HepG2 (cell line): ENCODE measurements at regions of chr12 and their contacts with region 1.

Region 1: GRCh38 chr12:27549801-27550652 is 26.0 kb downstream of the PPFIBP1 start:
- DNase-seq: peak; percentile 99
- ATAC-seq: peak; percentile 92
- H3K4me3 ChIP-seq: peak overlapping the region; percentile 21 to 57 (median 54); a peak in 5 of 6 replicates
- H3K27ac ChIP-seq: peak overlapping the region; percentile 86
- H3K4me1 ChIP-seq: peaks cover 87% of the 10 kb centered on the region
- H3K27me3 ChIP-seq: no peaks in the 10 kb centered on the region
- CTCF ChIP-seq: no peak; the same call in 1 of the 2 replicates
- EP300 ChIP-seq: peak; percentile 91 to 92; a peak in 3 of 4 replicates
- POLR2A ChIP-seq: peak in 1 of 2 experiments; percentile 46; a peak in 1 of 4 replicates
- RAD21 ChIP-seq: 0 out of 2 replicates have a peak, but pooled peaks have one; percentile 7

Region 2: GRCh38 chr12:27523642-27524493 is 26.2 kb before region 1 on chr12 and contains the start of gene PPFIBP1:
- CTCF ChIA-PET with region 1: no interaction called
- POLR2A ChIA-PET with region 1: interaction called, 65 read pairs
- in situ Hi-C with region 1: no loop called
- intact Hi-C with region 1: loop called (anchors 1 kb)
- DNase-seq: peak; percentile 96
- ATAC-seq: peak; percentile 99
- H3K4me3 ChIP-seq: peak within 1 kb of the TSS; percentile 74 to 97 (median 93)
- H3K27ac ChIP-seq: peak within 1 kb of the TSS; percentile 82
- H3K4me1 ChIP-seq: peaks cover 33% of the 10 kb centered on the region
- H3K27me3 ChIP-seq: no peaks in the 10 kb centered on the region; a peak in 1 of 5 replicates
- CTCF ChIP-seq: peak; percentile 48
- EP300 ChIP-seq: no peak
- POLR2A ChIP-seq: peak; percentile 89 to 92
- RAD21 ChIP-seq: peak; percentile 54
- total RNA-seq, gene PPFIBP1: 21.8 and 32.0 TPM in 2 replicates

Region 3: DNA sequence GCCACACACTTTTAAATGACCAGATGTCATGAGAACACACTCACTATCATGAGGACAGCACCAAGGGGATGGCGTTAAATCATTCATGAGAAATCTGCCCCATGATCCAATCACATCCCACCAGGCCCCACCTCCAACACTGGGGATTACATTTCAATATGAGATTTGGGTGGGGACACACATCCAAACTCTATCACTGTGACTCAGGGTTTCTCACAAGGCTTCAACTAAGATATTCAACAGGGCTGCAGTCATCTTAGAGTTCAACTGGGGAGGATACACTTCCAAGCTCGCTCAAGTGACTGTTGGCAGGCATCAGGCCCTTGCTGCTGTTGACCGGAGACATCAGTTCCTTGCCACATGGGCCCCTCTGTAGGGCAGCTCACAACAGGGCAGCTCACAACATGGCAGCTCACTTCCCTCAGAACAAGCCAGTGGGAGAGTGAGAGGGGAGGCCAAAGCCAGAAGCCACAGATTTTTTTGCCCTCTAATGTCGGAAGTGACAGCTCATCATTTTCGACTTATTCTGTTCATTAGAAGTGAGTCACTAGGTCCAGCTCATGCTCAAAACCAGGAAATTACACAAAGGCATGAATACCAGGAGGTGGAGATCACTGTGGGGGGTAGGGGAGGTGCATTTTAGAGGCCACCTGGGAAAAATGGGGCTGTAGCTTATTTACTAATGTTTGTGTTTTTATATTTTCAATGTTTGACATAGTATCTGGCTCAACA is 473.3 kb after region 1 on chr12:
- CTCF ChIA-PET with region 1: no interaction called
- POLR2A ChIA-PET with region 1: no interaction called
- in situ Hi-C with region 1: no loop called
- intact Hi-C with region 1: no loop called
- DNase-seq: peak; percentile 20
- ATAC-seq: no peak
- H3K4me3 ChIP-seq: no peak overlapping the region
- H3K27ac ChIP-seq: no peak overlapping the region
- H3K4me1 ChIP-seq: peaks cover 30% of the 10 kb centered on the region
- H3K27me3 ChIP-seq: 0 out of 5 replicates have a peak, but pooled peaks cover 0 to 3% of the 10 kb centered on the region in 2 experiments
- CTCF ChIP-seq: no peak
- EP300 ChIP-seq: no peak; a peak in 1 of 4 replicates
- POLR2A ChIP-seq: no peak
- RAD21 ChIP-seq: no peak